ENCODE measurements at regions of chr2 and their contacts with region 1.

Region 1: DNA sequence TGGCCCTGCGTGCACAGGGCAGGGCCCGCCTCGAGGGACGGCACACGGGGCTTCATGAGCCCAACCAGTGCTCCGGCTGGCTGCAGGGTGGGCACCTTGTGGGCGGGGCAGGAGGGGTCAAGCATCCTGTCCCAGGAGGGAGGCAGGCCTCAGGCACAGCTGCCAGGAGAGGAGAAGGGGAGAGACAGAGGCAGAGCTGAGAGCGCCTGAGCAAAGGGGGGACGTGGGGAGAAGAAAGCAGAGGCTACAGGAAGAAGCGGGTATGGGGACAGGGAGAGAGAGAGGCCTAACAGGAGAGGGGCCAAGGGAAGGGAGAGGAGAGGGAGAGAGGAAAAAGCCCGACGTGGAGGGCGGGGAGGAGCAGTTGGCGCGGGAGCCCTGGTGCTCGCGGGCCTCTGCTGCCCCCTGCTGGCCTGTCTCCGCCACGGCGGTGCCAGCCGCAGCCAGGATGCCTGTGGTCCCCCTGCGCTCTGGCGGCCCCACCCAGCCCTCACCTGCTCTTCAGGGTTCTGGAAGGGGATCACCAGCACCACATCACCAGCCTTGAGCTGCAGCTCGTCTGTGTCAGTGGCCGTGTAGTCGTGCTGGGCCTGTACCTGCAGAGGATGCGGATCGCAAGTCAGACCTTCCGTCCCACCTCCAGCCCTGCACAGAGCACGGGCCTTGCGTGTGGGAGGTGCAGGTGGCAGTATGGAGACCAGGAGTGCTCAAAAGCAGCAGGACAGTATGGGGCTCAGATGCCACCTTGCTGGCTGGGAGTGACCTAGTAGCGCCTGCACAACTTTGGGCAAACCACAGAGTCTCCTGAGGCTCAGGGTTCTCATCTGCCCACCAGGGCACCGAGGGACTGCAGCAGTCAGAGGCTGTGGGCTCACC is 56.8 kb downstream of the BIN1 start:
- DNase-seq: peak; percentile 26 to 96 (median 76)

Region 2: DNA sequence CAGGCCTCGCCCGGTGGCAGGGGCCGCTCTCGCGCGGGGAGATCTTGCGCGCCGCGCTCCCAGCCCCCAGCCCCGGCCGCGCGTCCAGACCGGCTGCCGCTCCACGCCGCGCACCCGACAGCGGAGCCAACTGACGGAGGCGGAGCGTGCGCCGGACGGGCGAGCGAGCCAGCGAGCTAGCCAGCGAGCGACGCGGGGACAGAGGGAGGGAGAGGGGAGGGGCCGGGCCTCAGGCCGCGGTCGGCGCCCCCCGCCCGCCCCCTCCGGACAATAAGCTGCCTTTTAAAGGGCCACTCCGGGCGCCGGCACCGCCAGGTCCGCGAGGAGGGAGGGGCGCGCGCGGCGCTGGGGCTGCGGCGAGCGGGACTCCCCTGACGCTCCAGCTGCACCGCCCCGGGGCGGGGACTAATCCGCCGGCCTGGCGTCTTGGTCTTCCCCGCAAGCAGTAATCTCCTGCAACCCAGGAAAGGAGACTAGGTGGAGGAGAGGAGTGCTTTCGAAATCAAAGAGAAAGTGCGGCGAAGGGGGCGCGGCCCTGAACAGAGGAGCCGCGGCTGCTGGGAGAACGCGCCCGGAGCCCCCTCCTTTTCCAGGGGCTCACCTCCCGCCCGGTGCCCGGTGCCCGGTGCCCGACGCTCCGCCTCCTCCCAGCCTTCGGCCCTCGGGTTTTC is 56.9 kb after region 1 on chr2 and contains the start of gene BIN1:
- intact Hi-C with region 1: loop called (anchors 10 kb)
- DNase-seq: peak; percentile 85 to 99 (median 92)

Region 3: GRCh38 chr2:127149384-127149783 is 99.2 kb after region 1 on chr2:
- intact Hi-C with region 1: loop called (anchors 5 kb)
- DNase-seq: no peak

Region 4: GRCh38 chr2:127220102-127220767 is 170.1 kb after region 1 on chr2 and contains the start of gene CYP27C1:
- intact Hi-C with region 1: no loop called
- DNase-seq: no peak

Measured in posterior cingulate gyrus (tissue), 11 donors.